ENCODE measurements at regions of chr20 and their contacts with region 1.

Region 1: GRCh38 chr20:2713285-2713684 is 20.7 kb downstream of the EBF4 start:
- DNase-seq: no peak
- ATAC-seq: peak; percentile 80
- H3K4me3 Mint-ChIP-seq: no peak overlapping the region
- H3K27ac Mint-ChIP-seq: no peak overlapping the region
- H3K4me1 Mint-ChIP-seq: no peaks in the 10 kb centered on the region
- H3K27me3 Mint-ChIP-seq: no peaks in the 10 kb centered on the region
- CTCF ChIP-seq: peak; percentile 36

Region 2: DNA sequence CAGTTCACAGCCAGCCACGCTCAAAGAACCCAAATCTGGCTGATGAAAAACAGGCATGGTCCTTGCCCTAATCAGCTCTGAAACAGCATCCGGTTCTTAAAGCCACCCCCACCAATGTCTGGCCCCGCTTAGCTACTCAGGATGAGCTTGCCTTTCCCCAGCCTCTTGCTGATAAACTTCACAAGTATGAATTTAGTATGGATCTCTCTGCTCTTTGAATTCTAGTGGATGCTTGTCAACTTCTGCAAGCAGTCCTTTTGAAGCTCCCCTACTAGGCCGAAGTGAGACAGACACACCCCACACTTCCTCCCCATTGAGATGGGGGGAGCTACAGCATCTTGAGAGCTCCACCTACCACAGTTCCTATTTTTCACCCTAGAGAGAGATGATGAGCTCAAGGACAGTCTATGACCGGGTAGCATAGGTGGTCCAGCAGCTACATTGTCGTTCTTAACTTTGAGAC is 16.0 kb after region 1 on chr20:
- CTCF ChIA-PET with region 1: interaction called, 13 read pairs
- POLR2A ChIA-PET with region 1: interaction called, 4 read pairs
- intact Hi-C with region 1: no loop called
- DNase-seq: peak; percentile 48
- ATAC-seq: peak; percentile 96
- H3K4me3 Mint-ChIP-seq: peak overlapping the region; percentile 33
- H3K27ac Mint-ChIP-seq: peak overlapping the region; percentile 85
- H3K4me1 Mint-ChIP-seq: peaks cover 19% of the 10 kb centered on the region
- H3K27me3 Mint-ChIP-seq: no peaks in the 10 kb centered on the region
- CTCF ChIP-seq: no peak